HAP-1 (cell line): ENCODE measurements at regions of chrX and their contacts with region 1.

Region 1: DNA sequence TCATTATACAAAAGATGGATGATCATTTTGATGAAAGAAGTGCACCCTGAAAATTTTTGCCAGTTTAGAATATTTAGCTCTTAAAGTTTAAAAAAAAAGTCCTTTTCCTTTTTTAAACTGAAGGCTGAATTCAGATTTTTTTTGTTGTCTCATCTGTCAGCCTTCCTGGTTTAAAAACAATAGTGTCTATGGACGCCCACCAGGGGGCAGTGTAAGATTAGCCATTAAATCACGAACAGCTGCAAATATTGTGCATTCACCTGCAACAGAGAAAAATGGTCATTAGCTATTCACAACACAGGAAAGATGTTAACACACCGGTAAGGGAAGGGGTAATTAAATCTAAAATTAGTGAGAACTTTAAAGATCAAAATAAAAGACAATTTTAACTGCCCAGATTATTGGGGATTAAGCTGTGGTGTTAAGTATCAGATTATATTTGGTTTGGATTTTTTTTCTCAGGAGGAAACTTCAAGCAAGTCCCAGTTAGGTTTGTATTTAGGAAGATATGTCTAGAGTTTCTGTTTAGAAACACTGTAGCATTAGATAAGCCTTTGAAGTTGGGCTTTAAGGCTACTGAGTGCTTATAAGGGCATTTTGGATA is 4.4 kb upstream of the CXorf38 start:
- DNase-seq: peak; percentile 64 to 85
- H3K4me3 ChIP-seq: no peak overlapping the region
- H3K4me1 ChIP-seq: peaks cover 4% of the 10 kb centered on the region
- H3K27me3 ChIP-seq: no peaks in the 10 kb centered on the region

Region 2: GRCh38 chrX:41164449-41164848 is 512.7 kb after region 1 on chrX:
- in situ Hi-C with region 1: loop called (anchors 25 kb)
- DNase-seq: no peak
- H3K4me3 ChIP-seq: no peak overlapping the region
- H3K4me1 ChIP-seq: peaks cover 7% of the 10 kb centered on the region
- H3K27me3 ChIP-seq: no peaks in the 10 kb centered on the region